Posterior vena cava (tissue), 2 donors: ENCODE measurements at regions of chr20 and their contacts with region 1.

Region 1: DNA sequence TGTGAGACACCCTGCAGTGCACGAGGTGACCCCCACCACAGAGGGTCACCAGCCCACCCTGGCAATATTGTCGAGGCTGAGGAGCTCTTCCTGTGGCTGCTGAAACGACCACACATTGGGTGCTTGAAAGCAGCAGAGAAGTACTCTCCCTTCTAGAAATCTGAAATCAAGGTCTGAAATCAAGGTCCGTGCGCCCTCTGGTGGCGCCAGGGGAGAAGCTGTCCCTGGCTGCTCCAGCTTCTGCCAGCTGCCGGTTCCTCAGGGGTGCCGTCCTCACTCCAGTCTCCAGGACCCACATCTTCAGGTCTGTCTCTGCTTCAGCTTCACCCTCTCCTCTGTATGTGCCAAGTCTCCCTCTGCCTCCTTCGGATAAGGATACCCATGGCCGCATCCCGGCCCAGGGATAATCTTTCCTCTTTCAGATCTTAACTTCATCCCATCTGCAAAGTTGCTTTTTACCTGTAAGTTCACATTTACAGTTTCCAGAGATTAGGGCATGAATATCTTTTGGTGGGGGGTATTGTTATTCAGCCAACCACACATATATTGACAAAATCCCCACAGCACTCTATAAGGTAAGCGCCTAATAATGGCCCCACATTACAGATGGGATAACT is 108.3 kb upstream of the PHACTR3 start:
- DNase-seq: peak; percentile 86

Region 2: GRCh38 chr20:58640446-58640845 is 855.6 kb before region 1 on chr20:
- intact Hi-C with region 1: loop called in 1 of 2 experiments (anchors 5 kb)
- DNase-seq: peak; percentile 53

Region 3: DNA sequence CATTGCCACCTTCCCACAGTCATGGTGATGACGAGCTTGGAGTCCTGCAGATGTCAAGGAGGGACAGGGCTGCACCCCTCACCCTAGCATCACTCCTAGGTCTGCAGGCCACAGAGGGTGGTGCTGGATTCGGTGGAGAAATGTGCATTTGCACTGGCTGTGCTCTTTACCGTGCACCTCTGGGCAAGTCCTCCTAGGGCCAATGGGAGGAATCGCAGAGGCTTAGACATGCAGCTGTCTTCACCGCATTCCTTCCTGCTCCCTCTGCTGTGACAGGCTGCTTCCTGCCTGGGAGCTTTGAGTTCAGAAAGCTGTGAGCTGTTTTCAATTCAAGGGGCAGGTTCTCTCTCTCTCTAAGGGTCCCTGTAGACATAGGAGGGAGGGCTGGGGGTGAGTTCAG is 110.5 kb before region 1 on chr20:
- intact Hi-C with region 1: no loop called
- DNase-seq: no peak